ENCODE measurements at regions of chrX and their contacts with region 1.

Region 1: GRCh38 chrX:109840585-109840984 is 107.5 kb upstream of the ACSL4 start:
- DNase-seq: peak; percentile 16 to 63
- H3K4me3 ChIP-seq: no peak overlapping the region
- H3K27ac ChIP-seq: no peak overlapping the region
- H3K4me1 ChIP-seq: peaks cover 11% of the 10 kb centered on the region
- H3K27me3 ChIP-seq: no peaks in the 10 kb centered on the region
- CTCF ChIP-seq: no peak

Region 2: GRCh38 chrX:109536439-109537336 is 303.9 kb before region 1 on chrX and contains the start of gene NXT2:
- CTCF ChIA-PET with region 1: no interaction called
- POLR2A ChIA-PET with region 1: interaction called, 17 read pairs
- intact Hi-C with region 1: loop called (anchors 10 kb)
- DNase-seq: peak; percentile 87 to 93
- H3K4me3 ChIP-seq: peak within 1 kb of the TSS; percentile 73
- H3K27ac ChIP-seq: peak within 1 kb of the TSS; percentile 97
- H3K4me1 ChIP-seq: peaks cover 14% of the 10 kb centered on the region
- H3K27me3 ChIP-seq: no peaks in the 10 kb centered on the region
- CTCF ChIP-seq: no peak
- total RNA-seq, gene NXT2: 12.1 and 20.0 TPM in 2 replicates

Region 3: DNA sequence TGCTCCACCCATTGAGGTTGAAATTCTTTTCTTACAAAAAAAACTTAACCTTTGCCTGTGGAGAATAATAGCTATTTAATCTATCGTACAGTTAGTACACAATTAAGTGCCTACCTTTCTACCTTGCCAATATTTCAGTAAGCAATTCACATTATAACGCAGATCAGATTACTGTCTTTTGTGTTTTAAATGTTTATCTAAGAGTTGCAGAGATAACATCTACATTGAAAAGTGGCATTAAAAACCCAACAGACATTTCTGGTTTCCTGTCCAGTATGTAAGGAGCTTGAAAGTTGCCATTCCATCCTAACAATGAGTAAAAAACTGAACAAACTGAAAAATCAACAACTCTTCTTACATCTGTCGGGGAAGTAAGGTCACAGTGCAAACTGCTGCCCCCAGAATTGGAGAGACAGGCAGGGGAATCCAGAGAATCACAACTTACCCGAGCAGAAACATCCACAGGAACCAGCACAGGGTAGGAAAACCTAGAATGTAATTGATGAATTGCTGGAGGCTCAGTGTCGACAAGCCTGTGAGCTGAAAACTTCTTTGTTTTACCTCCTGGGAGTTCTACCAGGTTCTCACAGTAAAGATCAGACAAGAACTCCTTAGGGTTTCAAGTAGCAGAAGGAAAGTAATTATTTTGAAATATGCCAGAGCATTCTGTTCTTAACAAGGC is 80.2 kb before region 1 on chrX:
- CTCF ChIA-PET with region 1: no interaction called
- POLR2A ChIA-PET with region 1: no interaction called
- intact Hi-C with region 1: loop called (anchors 2 kb)
- DNase-seq: peak; percentile 12 to 47
- H3K4me3 ChIP-seq: no peak overlapping the region
- H3K27ac ChIP-seq: no peak overlapping the region
- H3K4me1 ChIP-seq: peaks cover 15% of the 10 kb centered on the region
- H3K27me3 ChIP-seq: no peaks in the 10 kb centered on the region
- CTCF ChIP-seq: no peak

Region 4: DNA sequence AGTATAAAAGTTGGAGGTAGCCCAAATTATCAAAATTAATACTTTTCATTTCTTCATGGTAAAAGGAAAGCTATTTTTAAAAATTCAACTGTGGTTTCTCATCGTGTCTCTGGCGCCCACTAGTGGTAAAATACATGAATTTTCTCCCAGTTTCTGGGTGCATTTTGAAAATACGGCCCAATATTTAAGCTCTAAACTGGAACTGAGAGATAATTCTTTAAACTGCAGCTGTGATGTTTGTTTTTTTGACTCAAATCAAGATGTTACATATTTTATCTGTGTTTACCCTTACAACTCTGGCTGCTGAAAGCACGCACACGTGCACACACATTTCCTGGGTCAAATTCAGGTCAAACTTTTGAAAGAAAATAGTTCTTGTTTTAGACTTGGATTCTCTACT is 16.4 kb after region 1 on chrX:
- CTCF ChIA-PET with region 1: interaction called, 3 read pairs
- POLR2A ChIA-PET with region 1: interaction called, 10 read pairs
- intact Hi-C with region 1: no loop called
- DNase-seq: no peak
- H3K4me3 ChIP-seq: no peak overlapping the region
- H3K27ac ChIP-seq: no peak overlapping the region
- H3K4me1 ChIP-seq: peaks cover 7% of the 10 kb centered on the region; the same call in 1 of the 2 replicates
- H3K27me3 ChIP-seq: no peaks in the 10 kb centered on the region
- CTCF ChIP-seq: peak; percentile 96